Heart left ventricle (tissue), 16 donors: ENCODE measurements at regions of chr4 and their contacts with region 1.

Region 1: GRCh38 chr4:40924096-40924792 is 174.5 kb downstream of the NSUN7 start:
- DNase-seq: peak; percentile 34 to 81 (median 49)
- ATAC-seq: peak; percentile 22 to 62 (median 60)
- H3K4me3 ChIP-seq: no peak overlapping the region
- H3K27ac ChIP-seq: no peak overlapping the region
- H3K4me1 ChIP-seq: peaks cover 0 to 19% (median 0%) of the 10 kb centered on the region in 12 donors
- H3K27me3 ChIP-seq: no peaks in the 10 kb centered on the region
- CTCF ChIP-seq: peak; percentile 66 to 88 (median 81)
- POLR2A ChIP-seq: no peak

Region 2: DNA sequence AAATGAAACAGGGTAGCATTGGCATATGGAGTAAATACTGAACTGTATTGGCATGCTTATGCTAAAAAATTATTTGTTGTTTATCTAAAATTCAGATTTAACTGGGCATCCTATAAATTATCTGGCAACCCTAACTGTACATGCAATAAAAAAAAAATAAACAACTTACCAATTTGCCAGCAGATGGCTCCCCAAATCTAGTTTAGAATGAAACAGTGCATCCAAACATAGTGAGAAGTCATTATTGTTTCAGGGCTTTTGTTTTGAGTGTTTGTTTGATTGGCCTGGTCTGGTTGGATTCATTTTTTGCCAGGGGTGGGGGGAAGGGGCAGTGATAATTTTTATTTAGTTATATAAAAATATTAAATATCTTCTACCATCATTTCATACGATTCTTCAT is 187.3 kb before region 1 on chr4:
- intact Hi-C with region 1: loop called in 1 of 10 experiments (anchors 10 kb)
- DNase-seq: no peak
- ATAC-seq: no peak
- H3K4me3 ChIP-seq: no peak overlapping the region
- H3K27ac ChIP-seq: no peak overlapping the region
- H3K4me1 ChIP-seq: peaks cover 0 to 20% (median 0%) of the 10 kb centered on the region in 12 donors
- H3K27me3 ChIP-seq: peaks cover 0 to 5% (median 0%) of the 10 kb centered on the region in 9 donors
- CTCF ChIP-seq: peak in 8 of 12 donors; percentile 18 to 50 (median 31)
- POLR2A ChIP-seq: no peak

Region 3: DNA sequence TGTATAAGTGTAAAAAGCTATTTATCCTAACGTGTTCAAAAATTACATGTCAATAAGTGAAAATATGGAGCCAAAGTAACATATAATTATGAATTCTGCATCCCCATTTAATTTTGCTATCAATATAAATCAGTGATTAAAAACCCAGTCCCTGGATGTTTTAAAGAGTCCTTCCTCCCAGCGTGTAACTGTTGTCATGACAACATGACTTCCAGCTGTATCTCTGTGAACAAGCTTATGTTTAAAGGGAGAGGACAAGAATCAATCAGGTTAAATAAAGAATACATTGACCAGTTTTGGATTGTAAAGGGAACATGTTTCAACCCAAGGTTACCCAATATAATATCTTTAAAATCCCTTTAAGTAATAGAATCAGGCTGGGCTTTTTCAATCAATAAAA is 45.3 kb after region 1 on chr4:
- intact Hi-C with region 1: loop called in 3 of 10 experiments (anchors 5 to 10 kb)
- DNase-seq: no peak
- ATAC-seq: no peak
- H3K4me3 ChIP-seq: no peak overlapping the region
- H3K27ac ChIP-seq: no peak overlapping the region
- H3K4me1 ChIP-seq: peaks cover 0 to 2% (median 0%) of the 10 kb centered on the region in 12 donors
- H3K27me3 ChIP-seq: no peaks in the 10 kb centered on the region
- CTCF ChIP-seq: no peak
- POLR2A ChIP-seq: no peak

Region 4: GRCh38 chr4:40976343-40976742 is 52.1 kb after region 1 on chr4:
- intact Hi-C with region 1: loop called in 6 of 10 experiments (anchors 5 to 10 kb)
- DNase-seq: peak in 1 of 5 donors; percentile 52
- ATAC-seq: peak in 2 of 4 donors; percentile 52 to 63
- H3K4me3 ChIP-seq: no peak overlapping the region
- H3K27ac ChIP-seq: no peak overlapping the region
- H3K4me1 ChIP-seq: peaks cover 0 to 7% (median 0%) of the 10 kb centered on the region in 12 donors
- H3K27me3 ChIP-seq: no peaks in the 10 kb centered on the region
- CTCF ChIP-seq: peak; percentile 63 to 87 (median 75)
- POLR2A ChIP-seq: no peak

Region 5: GRCh38 chr4:41102414-41103092 is 178.3 kb after region 1 on chr4:
- intact Hi-C with region 1: loop called in 1 of 10 experiments (anchors 10 kb)
- DNase-seq: no peak
- ATAC-seq: no peak
- H3K4me3 ChIP-seq: no peak overlapping the region
- H3K27ac ChIP-seq: no peak overlapping the region
- H3K4me1 ChIP-seq: peaks cover 0 to 70% (median 9%) of the 10 kb centered on the region in 12 donors
- H3K27me3 ChIP-seq: no peaks in the 10 kb centered on the region
- CTCF ChIP-seq: no peak
- POLR2A ChIP-seq: no peak

Region 6: DNA sequence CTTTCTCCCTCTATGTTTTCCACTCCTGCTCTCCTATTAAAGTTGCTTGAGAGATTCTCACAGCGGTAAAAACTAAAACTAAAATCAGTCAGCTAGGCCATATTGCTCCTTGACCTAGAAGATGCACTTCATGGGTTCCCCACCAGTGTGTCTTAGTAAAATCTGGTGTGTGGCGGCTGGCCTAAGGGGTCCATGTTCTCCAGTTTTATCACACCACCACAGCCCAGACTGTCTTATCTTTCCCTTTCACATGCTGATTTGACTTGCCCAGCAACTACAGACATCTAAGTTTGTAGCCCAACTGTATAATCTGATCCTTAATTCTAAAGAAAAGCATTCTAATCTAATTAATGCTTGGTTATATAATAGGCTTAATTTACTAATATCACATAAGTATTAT is 1664.7 kb after region 1 on chr4:
- intact Hi-C with region 1: no loop called
- DNase-seq: no peak
- ATAC-seq: no peak
- H3K4me3 ChIP-seq: no peak overlapping the region
- H3K27ac ChIP-seq: no peak overlapping the region
- H3K4me1 ChIP-seq: no peaks in the 10 kb centered on the region
- H3K27me3 ChIP-seq: no peaks in the 10 kb centered on the region
- CTCF ChIP-seq: no peak
- POLR2A ChIP-seq: no peak